ENCODE measurements at regions of chr16 and their contacts with region 1.

Region 1: DNA sequence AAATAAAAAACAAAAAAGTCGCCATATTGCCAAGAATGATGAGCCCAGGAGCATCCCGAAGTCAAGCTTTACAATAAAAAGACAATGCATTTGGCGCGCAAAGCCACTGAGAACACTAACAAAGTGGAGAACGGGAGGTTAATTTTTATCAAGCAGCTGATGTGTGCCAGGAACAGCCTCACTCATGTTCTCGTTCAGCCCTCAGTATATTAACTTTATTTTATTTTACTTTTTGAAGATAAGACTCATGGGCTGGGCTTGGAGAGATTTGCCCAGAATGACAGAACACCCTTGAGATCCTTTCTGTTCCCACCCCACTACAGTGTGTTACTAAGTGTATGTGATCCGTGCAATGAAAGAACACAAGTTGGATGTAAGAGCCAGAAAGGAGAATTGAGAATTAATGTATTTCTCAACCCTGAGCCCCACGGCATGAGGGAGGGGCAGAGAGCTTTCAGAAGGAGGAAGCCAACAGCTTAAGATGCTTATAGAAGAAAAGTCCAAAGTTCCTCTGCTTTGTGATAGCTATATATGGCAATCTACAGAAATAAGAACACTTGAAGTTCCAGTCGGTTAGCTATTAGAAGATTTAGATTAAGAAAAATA is 48.4 kb downstream of the COTL1 start:
- DNase-seq: peak; percentile 69
- H3K4me3 Mint-ChIP-seq: peak overlapping the region; percentile 52
- H3K27ac Mint-ChIP-seq: peak overlapping the region; percentile 90
- H3K4me1 Mint-ChIP-seq: peaks cover 58% of the 10 kb centered on the region
- H3K27me3 Mint-ChIP-seq: no peaks in the 10 kb centered on the region
- CTCF ChIP-seq: no peak

Region 2: DNA sequence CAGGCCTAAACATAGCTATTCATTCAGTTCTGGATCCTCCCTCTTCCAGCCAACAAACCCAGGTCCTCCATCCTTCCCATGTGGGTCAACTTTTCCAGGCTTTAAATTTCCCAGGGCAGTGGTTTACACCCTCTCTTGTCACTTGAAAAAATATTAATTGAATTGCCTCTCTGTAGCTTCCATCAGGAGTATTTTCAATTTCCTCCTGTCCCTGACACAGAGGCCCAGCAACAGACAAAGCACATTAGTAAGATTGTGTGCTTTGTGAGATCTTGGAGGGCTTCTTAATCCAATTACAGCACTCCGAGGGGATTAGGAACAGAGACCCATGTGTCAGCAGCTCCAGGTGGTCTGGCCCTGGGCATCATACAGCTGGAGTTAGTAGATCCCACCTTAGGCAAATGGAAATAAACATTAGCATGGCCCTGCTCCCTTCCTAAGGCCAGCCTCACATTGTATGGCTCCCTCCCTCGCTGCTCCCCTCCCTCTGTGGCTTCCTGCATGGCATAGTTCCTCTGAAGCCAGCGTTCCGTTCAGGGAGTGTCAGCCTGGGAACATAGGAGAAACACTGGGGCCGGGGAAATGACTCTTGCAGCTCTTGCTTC is 894.5 kb before region 1 on chr16:
- CTCF ChIA-PET with region 1: no interaction called
- intact Hi-C with region 1: no loop called
- DNase-seq: no peak
- H3K4me3 Mint-ChIP-seq: no peak overlapping the region
- H3K27ac Mint-ChIP-seq: no peak overlapping the region
- H3K4me1 Mint-ChIP-seq: no peaks in the 10 kb centered on the region
- H3K27me3 Mint-ChIP-seq: peaks cover 33% of the 10 kb centered on the region
- CTCF ChIP-seq: no peak

Region 3: GRCh38 chr16:84511180-84511824 is 58.2 kb before region 1 on chr16:
- CTCF ChIA-PET with region 1: no interaction called
- intact Hi-C with region 1: loop called (anchors 2 kb)
- DNase-seq: peak; percentile 85
- H3K4me3 Mint-ChIP-seq: no peak overlapping the region
- H3K27ac Mint-ChIP-seq: peak overlapping the region; percentile 25
- H3K4me1 Mint-ChIP-seq: peaks cover 40% of the 10 kb centered on the region
- H3K27me3 Mint-ChIP-seq: no peaks in the 10 kb centered on the region
- CTCF ChIP-seq: peak; percentile 84

Region 4: DNA sequence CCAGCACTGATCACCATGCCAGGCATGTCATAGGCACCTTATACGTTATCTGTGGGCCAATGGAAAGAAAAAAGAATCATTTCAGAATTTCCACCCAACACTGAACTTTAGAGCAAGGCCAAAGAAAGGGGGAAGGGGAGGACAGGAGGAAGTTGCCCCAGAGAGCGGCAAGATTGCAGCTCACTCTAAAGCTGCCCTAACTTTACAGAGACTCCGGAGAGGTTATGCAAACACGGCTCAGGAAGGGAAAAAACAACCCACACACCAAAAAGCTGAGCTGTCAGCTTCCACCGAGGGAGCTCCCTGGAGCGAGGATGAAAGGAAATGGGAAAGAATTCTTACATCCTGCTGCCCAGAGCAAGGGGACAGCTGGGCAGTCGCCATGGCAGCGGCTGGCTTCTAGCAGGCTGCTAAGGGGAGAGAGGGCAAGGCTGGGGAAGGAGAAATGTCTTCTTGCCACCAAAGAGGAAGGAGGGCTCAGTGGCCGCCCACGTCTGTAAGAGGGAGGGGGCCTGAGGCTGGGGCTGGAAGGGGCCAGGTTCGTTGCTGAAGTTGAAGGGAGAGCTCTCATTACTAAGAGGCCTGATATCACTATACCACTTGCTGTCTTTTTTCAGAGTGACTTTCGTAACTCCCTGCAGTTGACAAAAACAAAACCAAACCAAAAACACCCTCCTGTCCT is 30.2 kb after region 1 on chr16:
- CTCF ChIA-PET with region 1: interaction called, 10 read pairs
- intact Hi-C with region 1: no loop called
- DNase-seq: no peak
- H3K4me3 Mint-ChIP-seq: peak overlapping the region; percentile 20
- H3K27ac Mint-ChIP-seq: peak overlapping the region; percentile 45
- H3K4me1 Mint-ChIP-seq: peaks cover 62% of the 10 kb centered on the region
- H3K27me3 Mint-ChIP-seq: no peaks in the 10 kb centered on the region
- CTCF ChIP-seq: no peak

Region 5: GRCh38 chr16:85037050-85037410 is 467.5 kb after region 1 on chr16:
- CTCF ChIA-PET with region 1: no interaction called
- intact Hi-C with region 1: no loop called
- DNase-seq: peak; percentile 23
- H3K4me3 Mint-ChIP-seq: no peak overlapping the region
- H3K27ac Mint-ChIP-seq: no peak overlapping the region
- H3K4me1 Mint-ChIP-seq: peaks cover 13% of the 10 kb centered on the region
- H3K27me3 Mint-ChIP-seq: no peaks in the 10 kb centered on the region
- CTCF ChIP-seq: no peak

Measured in Calu3 (cell line).